ENCODE measurements at regions of chr11 and their contacts with region 1.

Region 1: DNA sequence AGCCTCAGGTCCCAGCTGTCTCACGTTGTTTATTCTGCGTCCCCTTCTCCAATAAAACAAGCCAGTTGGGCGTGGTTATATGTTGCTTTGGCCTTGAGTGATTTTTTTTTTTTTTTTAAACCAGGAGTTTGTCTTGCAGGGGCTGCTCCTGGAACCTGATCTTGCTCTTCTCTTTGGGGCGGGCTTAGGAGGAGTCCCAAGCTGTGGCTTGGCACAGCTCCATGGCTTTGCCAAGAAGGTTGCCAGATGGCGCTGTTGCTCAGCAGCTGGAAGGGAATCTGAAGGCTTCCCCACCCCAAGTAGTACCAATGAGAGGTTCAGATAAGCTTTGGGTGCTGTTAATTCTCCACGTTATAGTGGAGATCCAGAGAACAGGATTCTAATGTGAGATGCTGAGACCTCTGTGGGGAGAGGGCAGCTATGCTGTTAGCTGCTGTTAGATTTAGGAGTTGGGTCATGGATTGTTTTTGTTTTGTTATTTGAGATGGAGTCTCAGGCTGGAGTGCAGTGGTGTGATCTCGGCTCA is 2.0 kb upstream of the FERMT3 start:
- DNase-seq: peak; percentile 87 to 94
- ATAC-seq: peak; percentile 73

Region 2: DNA sequence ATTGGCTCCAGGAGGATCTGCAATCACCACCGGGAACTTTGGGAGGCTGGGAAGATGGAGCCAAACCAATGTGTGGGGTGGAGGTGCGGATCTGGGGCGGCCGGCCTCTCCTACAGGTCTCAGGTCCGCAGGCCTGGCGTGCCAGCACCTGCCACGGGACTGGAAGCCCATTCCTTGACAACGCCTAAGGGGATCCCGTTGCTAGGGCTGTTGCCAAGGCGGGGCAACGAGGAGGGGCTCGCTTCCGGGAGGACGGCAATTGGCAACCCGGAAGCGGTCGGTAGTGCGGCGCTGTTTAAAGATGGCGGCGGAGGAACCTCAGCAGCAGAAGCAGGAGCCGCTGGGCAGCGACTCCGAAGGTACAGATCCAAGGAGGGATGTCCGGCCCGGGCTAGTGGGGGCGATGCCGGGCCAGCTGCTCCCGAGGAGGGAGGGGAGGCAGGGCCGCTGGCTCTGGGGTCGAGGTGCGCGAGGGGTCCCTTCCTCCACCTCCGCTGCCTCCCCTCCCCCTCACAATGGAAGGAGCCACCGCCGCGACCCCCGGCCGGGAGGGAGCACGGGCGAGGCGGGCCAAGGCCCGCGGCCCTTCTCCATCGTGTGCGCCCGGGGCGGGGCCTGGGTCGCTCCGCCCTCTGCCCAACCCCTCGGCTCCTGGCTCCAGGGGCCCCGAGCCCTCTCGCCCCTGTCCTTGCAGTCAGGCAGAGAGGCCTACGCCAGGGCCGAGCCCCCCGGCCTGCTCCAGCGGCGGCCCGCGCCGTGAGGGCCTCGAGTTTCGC is 218.2 kb before region 1 on chr11 and contains the start of gene OTUB1:
- intact Hi-C with region 1: no loop called
- DNase-seq: peak; percentile 94 to 96
- ATAC-seq: peak; percentile 95
- total RNA-seq, gene OTUB1: 67.7 to 79.7 TPM

Region 3: GRCh38 chr11:64263021-64263946 is 58.8 kb after region 1 on chr11:
- intact Hi-C with region 1: no loop called
- DNase-seq: no peak
- ATAC-seq: no peak

Region 4: DNA sequence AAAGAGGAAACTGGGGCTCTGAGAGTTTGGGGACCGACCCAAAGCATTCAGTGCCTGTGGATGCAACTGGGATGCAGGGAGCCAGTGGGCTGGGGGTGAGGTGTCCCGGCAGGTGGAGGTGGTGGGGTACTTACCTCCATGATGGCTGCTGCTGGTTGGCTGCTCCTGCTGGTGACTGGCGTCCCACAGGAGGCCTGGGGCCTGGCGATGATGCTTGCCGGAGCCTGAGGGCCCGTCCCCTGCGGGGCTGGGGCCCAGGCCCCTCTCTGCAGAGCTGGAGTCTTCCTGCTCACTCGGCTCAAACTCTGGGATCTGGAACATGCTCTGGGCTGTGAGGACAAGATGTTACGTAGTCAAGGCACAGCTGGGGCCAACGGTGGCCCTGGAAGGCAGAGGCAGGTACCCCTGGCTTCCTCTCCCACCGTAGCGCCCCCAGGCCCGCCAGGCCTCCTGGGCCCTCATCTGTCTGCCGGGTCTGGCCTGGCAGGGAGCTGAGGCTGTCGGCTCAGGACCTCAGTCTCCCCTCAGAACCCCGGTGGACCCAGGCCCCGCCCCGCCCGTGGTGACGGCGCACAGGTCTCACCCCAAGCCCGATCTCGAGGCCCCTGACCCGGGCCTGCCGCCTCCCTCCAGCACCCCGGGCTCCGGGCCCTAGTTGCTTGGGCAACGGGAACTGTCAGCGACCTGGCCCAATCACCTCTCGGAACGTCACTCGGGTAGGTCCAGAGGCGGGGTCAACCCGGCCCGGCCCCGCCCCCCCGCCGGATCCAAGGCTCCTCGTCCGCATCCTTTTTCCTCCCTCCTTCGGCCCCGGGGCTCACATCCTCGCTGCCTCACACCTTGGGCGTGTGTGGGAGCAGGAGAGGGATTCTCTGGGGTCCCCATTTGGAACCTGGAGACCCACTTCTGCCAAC is 79.8 kb after region 1 on chr11 and contains the start of gene BAD:
- intact Hi-C with region 1: loop called in 1 of 2 experiments (anchors 10 kb)
- DNase-seq: peak; percentile 96
- ATAC-seq: peak; percentile 85
- total RNA-seq, gene BAD: 83.9 to 90.0 TPM

Region 5: GRCh38 chr11:64304316-64305072 is 100.0 kb after region 1 on chr11:
- intact Hi-C with region 1: loop called in 1 of 2 experiments (anchors 10 kb)
- DNase-seq: peak; percentile 94 to 100
- ATAC-seq: peak; percentile 39